SK-N-SH (cell line): ENCODE measurements at regions of chr9 and their contacts with region 1.

Region 1: DNA sequence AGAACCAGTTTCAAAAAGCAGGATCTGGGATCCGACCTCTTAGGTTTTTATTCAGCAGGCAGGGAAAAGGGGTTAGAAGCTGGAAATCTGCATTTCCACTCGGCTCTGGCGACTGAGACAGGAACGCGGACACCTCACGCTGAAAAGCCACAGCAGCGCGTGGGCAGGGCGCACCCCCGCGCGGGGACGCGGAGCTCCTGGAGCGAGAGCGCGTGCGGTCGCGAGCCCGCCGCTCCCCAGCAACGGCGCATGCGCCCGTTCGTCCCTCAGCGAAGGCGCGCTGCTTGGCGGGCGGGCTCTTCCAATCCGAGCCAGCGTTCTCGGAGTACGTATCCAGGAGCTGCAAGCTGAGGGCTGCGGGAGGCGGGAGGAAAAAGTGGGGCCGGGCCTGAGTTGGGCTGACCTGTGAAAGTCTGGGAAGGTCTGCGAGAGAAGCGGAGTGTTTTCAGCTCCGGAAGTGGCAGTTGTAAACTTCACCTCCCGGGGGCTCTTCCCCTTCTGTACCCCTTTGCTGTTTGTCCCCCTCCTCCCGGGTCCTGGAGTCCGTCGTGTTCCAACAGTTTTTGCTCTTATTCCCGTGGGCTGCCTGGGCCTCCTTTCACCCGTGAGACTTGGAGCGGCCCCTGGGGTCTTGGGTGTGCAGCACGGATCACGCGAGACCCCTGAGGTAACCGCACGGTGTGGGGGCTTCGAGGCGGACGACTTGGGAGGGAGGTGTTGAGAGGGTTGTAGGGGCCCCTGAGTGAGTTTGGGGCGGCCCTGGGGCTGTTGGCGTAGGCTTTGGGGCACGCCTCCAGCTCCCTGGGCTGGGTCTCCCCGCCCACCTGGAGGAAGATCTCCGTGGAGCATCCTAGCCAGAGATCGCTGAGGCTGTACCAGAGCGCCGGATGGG is at the start of gene CCDC171:
- DNase-seq: peak; percentile 96
- H3K4me3 ChIP-seq: peak within 1 kb of the TSS; percentile 77 to 86
- H3K27ac ChIP-seq: peak within 1 kb of the TSS; percentile 92 to 96
- H3K4me1 ChIP-seq: no peaks in the 10 kb centered on the region; a peak in 2 of 4 replicates
- H3K27me3 ChIP-seq: no peaks in the 10 kb centered on the region
- CTCF ChIP-seq: no peak
- EP300 ChIP-seq: peak in 1 of 2 experiments; percentile 39; a peak in 1 of 4 replicates
- RAD21 ChIP-seq: no peak
- polyA plus RNA-seq, gene CCDC171: 0.54 and 1.1 TPM in 2 replicates

Region 2: GRCh38 chr9:15510789-15511575 is 41.9 kb before region 1 on chr9 and contains the start of gene PSIP1:
- CTCF ChIA-PET with region 1: interaction called, 6 read pairs
- POLR2A ChIA-PET with region 1: interaction called, 45 read pairs
- DNase-seq: peak; percentile 90
- H3K4me3 ChIP-seq: peak within 1 kb of the TSS; percentile 78 to 91
- H3K27ac ChIP-seq: peak within 1 kb of the TSS; percentile 89 to 98
- H3K4me1 ChIP-seq: peaks cover 8 to 11% of the 10 kb centered on the region in 2 experiments; a peak in 2 of 4 replicates
- H3K27me3 ChIP-seq: no peaks in the 10 kb centered on the region
- CTCF ChIP-seq: no peak
- EP300 ChIP-seq: peak; percentile 44 to 64; a peak in 3 of 4 replicates
- RAD21 ChIP-seq: no peak
- polyA plus RNA-seq, gene PSIP1: 19.9 and 21.0 TPM in 2 replicates

Region 3: GRCh38 chr9:15522130-15522755 is 30.6 kb before region 1 on chr9:
- CTCF ChIA-PET with region 1: no interaction called
- POLR2A ChIA-PET with region 1: no interaction called
- DNase-seq: no peak
- H3K4me3 ChIP-seq: no peak overlapping the region
- H3K27ac ChIP-seq: no peak overlapping the region
- H3K4me1 ChIP-seq: no peaks in the 10 kb centered on the region
- H3K27me3 ChIP-seq: no peaks in the 10 kb centered on the region
- CTCF ChIP-seq: no peak
- EP300 ChIP-seq: no peak
- RAD21 ChIP-seq: no peak